Heart left ventricle (tissue), 16 donors: ENCODE measurements at regions of chr14 and their contacts with region 1.

Region 1: GRCh38 chr14:22766456-22767322 is at the start of gene OXA1L:
- DNase-seq: peak; percentile 97 to 99 (median 99)
- ATAC-seq: peak; percentile 92 to 97 (median 94)
- H3K4me3 ChIP-seq: peak within 1 kb of the TSS; percentile 44 to 97 (median 84)
- H3K27ac ChIP-seq: peak within 1 kb of the TSS; percentile 69 to 93 (median 88)
- H3K4me1 ChIP-seq: peaks cover 0 to 34% (median 23%) of the 10 kb centered on the region in 12 donors
- H3K27me3 ChIP-seq: no peaks in the 10 kb centered on the region
- CTCF ChIP-seq: no peak
- POLR2A ChIP-seq: peak in 1 of 2 donors; percentile 63
- total RNA-seq, gene OXA1L: 91.5 to 205 (median 143) TPM

Region 2: GRCh38 chr14:22570132-22570949 is 196.3 kb before region 1 on chr14:
- intact Hi-C with region 1: loop called in 1 of 10 experiments (anchors 10 kb)
- DNase-seq: peak in 3 of 5 donors; percentile 52 to 78 (median 77)
- ATAC-seq: peak; percentile 47 to 81 (median 72)
- H3K4me3 ChIP-seq: peak overlapping the region in 1 of 12 donors; percentile 23
- H3K27ac ChIP-seq: peak overlapping the region in 5 of 12 donors; percentile 9 to 83 (median 30)
- H3K4me1 ChIP-seq: peaks cover 0 to 48% (median 8%) of the 10 kb centered on the region in 12 donors
- H3K27me3 ChIP-seq: no peaks in the 10 kb centered on the region
- CTCF ChIP-seq: peak; percentile 70 to 86 (median 78)
- POLR2A ChIP-seq: no peak

Region 3: GRCh38 chr14:22589096-22589839 is 177.4 kb before region 1 on chr14 and contains the start of gene DAD1:
- intact Hi-C with region 1: loop called in 2 of 10 experiments (anchors 5 to 10 kb)
- DNase-seq: peak; percentile 98 to 100 (median 98)
- ATAC-seq: peak; percentile 99
- H3K4me3 ChIP-seq: peak within 1 kb of the TSS; percentile 62 to 98 (median 80)
- H3K27ac ChIP-seq: peak within 1 kb of the TSS; percentile 29 to 94 (median 91)
- H3K4me1 ChIP-seq: peaks cover 0 to 52% (median 41%) of the 10 kb centered on the region in 12 donors
- H3K27me3 ChIP-seq: no peaks in the 10 kb centered on the region
- CTCF ChIP-seq: no peak
- POLR2A ChIP-seq: peak in 1 of 2 donors; percentile 82
- total RNA-seq, gene DAD1: 108 to 236 (median 147) TPM

Region 4: GRCh38 chr14:22598099-22598899 is 168.4 kb before region 1 on chr14 and contains the start of gene ABHD4:
- intact Hi-C with region 1: loop called in 1 of 10 experiments (anchors 10 kb)
- DNase-seq: peak; percentile 84 to 91 (median 86)
- ATAC-seq: peak; percentile 93 to 99 (median 98)
- H3K4me3 ChIP-seq: peak within 1 kb of the TSS; percentile 43 to 91 (median 82)
- H3K27ac ChIP-seq: peak within 1 kb of the TSS in 11 of 12 donors; percentile 59 to 91 (median 83)
- H3K4me1 ChIP-seq: peaks cover 3 to 27% (median 17%) of the 10 kb centered on the region in 12 donors
- H3K27me3 ChIP-seq: peaks cover 0 to 5% (median 0%) of the 10 kb centered on the region in 9 donors
- CTCF ChIP-seq: no peak
- POLR2A ChIP-seq: peak in 1 of 2 donors; percentile 78
- total RNA-seq, gene ABHD4: 16.8 to 35.5 (median 25.9) TPM

Region 5: DNA sequence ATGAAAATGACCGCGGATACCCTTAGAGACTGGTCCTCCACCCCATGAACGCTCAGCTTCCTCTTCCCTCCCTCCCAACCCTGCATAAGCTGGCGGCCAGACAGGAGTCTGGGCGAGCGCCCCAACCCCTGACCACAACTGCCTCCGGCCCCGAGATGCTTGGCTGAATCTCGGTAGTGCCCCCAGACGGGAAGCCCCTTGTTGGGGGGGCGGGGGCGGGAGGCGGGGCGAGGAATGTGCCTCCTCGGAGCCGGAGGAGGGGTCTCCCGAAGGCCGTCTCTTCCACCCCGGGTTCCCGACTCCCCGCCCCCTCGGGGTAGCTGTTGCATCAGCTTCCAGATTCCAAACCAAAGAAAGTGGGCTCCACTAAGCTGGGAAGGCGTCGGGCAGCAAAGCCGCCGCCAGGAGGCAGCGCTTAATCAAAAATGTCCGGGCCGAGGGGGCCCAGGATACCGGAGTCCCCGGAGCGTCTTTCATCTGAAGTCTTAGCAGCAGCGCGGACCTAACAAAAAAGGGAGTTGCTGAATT is 55.9 kb after region 1 on chr14:
- intact Hi-C with region 1: no loop called
- DNase-seq: peak; percentile 72 to 86 (median 79)
- ATAC-seq: peak; percentile 76 to 91 (median 85)
- H3K4me3 ChIP-seq: peak overlapping the region in 11 of 12 donors; percentile 14 to 59 (median 51)
- H3K27ac ChIP-seq: peak overlapping the region in 7 of 12 donors; percentile 11 to 70 (median 24)
- H3K4me1 ChIP-seq: peaks cover 0 to 54% (median 21%) of the 10 kb centered on the region in 12 donors
- H3K27me3 ChIP-seq: no peaks in the 10 kb centered on the region
- CTCF ChIP-seq: peak; percentile 71 to 98 (median 92)
- POLR2A ChIP-seq: no peak